ENCODE measurements at regions of chr1 and their contacts with region 1.

Region 1: DNA sequence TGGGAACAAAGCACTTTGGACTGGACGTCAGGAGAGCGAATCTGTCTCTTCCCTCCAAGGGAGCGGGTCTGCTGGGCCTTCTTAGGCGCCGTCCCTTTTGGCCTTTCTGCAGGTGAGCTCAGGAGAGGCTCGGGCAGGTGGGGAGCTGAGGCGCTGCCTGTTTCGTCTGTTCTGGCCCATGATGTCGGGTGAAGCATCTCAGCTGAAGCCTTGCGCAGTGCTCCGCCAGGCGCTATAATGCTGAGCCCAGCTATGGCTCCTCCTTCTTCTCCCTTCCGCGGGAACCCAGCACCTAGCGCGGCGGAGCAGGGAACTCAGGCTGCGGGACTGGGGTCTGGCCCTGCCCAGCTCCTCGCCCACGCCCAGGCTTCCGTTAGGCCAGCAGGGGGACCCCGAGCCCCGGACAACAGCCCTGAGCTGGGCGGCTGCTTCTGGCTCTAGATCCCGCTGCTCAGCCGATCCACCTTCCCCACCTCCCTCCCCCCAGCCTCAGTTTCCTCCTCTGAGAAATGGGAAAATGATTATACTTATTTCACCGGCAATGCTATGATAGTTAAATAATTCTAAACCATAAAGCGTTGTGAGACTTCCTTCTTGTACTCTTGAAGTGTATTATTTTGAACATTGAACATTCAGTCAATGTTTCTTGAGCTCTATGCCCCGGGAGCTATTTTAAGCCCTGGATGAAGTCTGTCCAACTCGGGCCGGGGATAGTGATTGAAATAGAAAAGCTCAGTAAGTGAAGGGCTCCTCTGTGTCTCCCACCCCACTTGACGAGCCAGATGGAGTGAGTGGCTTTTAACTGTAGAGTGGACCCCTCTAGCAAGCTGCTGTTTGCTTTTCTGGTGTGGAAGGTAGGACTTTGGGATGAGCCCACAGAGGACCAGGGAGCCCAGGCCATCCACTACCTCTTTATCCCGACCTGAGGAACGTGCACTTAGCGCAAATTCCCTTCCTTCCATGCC is 9.6 kb upstream of the ADORA1 start:
- DNase-seq: peak; percentile 21
- H3K4me3 ChIP-seq: no peak overlapping the region
- H3K27ac ChIP-seq: no peak overlapping the region
- H3K27me3 ChIP-seq: peaks cover 50% of the 10 kb centered on the region
- CTCF ChIP-seq: peak; percentile 85

Region 2: DNA sequence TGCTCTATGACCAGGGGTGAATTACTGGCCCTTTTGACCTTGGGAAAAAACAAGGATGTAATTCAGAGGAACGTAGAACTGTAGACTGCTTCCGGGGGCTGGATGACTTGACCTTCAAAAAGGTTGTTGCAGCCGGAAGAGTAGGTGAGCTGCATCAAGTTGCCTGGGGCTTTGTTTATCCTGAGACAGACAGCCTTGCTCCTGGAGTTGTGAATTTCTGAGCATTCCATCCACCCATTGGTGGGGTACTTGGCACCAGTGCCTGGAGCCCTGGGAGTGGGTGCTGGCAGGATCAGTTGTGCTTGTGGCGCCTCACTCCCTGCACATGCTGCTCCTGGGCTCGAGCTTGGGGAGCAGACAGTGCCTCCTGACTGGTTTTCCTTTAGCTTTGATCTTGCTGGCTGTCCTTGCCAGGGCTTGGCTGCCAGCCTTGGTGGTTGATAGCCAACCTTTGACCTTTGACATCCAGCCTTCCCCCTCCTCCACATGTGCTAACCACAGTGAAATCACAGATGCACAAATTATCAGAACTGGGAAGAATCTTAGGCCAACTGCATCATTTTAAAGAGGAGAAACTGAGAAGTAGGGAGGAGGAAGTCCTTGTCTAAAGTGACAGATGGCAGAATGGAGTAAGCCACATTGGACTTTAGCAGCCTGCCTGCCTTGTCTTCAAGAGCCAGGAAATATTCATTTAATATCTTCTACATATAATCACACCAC is 15.8 kb before region 1 on chr1:
- CTCF ChIA-PET with region 1: interaction called, 13 read pairs
- POLR2A ChIA-PET with region 1: no interaction called
- DNase-seq: no peak
- H3K4me3 ChIP-seq: no peak overlapping the region
- H3K27ac ChIP-seq: no peak overlapping the region
- H3K27me3 ChIP-seq: peaks cover 41% of the 10 kb centered on the region
- CTCF ChIP-seq: no peak

Region 3: DNA sequence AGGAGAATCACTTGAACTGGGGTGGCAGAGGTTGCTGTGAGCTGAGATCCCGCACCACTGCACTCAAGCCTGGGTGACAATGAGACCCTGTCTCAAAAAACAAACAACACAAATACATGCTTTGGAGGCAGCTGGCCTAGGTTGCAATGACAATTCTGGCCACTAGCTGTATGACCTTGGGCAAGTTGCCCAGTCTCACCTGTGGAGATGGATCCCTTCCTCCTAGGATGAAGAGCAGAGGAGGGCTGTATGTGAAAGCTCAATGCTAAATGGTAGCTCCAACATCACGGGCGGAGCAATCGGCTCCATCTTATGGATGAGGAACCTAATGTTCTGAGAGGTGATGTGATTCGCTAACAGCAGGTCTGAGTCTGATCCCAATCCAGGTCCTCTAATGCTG is 30.2 kb after region 1 on chr1:
- CTCF ChIA-PET with region 1: interaction called, 11 read pairs
- POLR2A ChIA-PET with region 1: no interaction called
- DNase-seq: no peak
- H3K4me3 ChIP-seq: no peak overlapping the region
- H3K27ac ChIP-seq: no peak overlapping the region
- H3K27me3 ChIP-seq: peaks cover 3% of the 10 kb centered on the region
- CTCF ChIP-seq: no peak

Region 4: GRCh38 chr1:203216274-203217138 is 98.6 kb after region 1 on chr1:
- CTCF ChIA-PET with region 1: interaction called, 253 read pairs
- POLR2A ChIA-PET with region 1: interaction called, 4 read pairs
- DNase-seq: peak; percentile 33
- H3K4me3 ChIP-seq: no peak overlapping the region
- H3K27ac ChIP-seq: no peak overlapping the region
- H3K27me3 ChIP-seq: peaks cover 42% of the 10 kb centered on the region
- CTCF ChIP-seq: peak; percentile 65

Region 5: GRCh38 chr1:203273206-203273868 is 155.4 kb after region 1 on chr1:
- CTCF ChIA-PET with region 1: interaction called, 164 read pairs
- POLR2A ChIA-PET with region 1: interaction called, 7 read pairs
- DNase-seq: no peak
- H3K4me3 ChIP-seq: 0 out of 2 replicates have a peak overlapping the region, but pooled peaks have one; percentile 20
- H3K27ac ChIP-seq: no peak overlapping the region
- H3K27me3 ChIP-seq: peaks cover 9% of the 10 kb centered on the region
- CTCF ChIP-seq: peak; percentile 98